GM12878 (cell line): ENCODE measurements at regions of chr14 and their contacts with region 1.

Region 1: GRCh38 chr14:30443368-30444007 is 115.5 kb upstream of the G2E3 start:
- DNase-seq: no peak
- ATAC-seq: peak; percentile 57; the same call in 1 of the 3 replicates
- H3K4me3 ChIP-seq: no peak overlapping the region
- H3K27ac ChIP-seq: no peak overlapping the region
- H3K4me1 ChIP-seq: no peaks in the 10 kb centered on the region
- H3K27me3 ChIP-seq: no peaks in the 10 kb centered on the region
- CTCF ChIP-seq: peak; percentile 32 to 71 (median 45); a peak in 5 of 6 replicates
- EP300 ChIP-seq: no peak
- POLR2A ChIP-seq: no peak
- RAD21 ChIP-seq: peak; percentile 80

Region 2: GRCh38 chr14:29548948-29549370 is 894.5 kb before region 1 on chr14:
- CTCF ChIA-PET with region 1: interaction called, 11 read pairs
- POLR2A ChIA-PET with region 1: no interaction called
- RAD21 ChIA-PET with region 1: interaction called, 5 read pairs
- SMC1A ChIA-PET with region 1: interaction called, 5 read pairs
- in situ Hi-C with region 1: loop called (anchors 10 kb)
- intact Hi-C with region 1: loop called (anchors 2 kb)
- DNase-seq: peak; percentile 5
- ATAC-seq: peak; percentile 84
- H3K4me3 ChIP-seq: no peak overlapping the region
- H3K27ac ChIP-seq: no peak overlapping the region
- H3K4me1 ChIP-seq: no peaks in the 10 kb centered on the region
- H3K27me3 ChIP-seq: no peaks in the 10 kb centered on the region
- CTCF ChIP-seq: peak; percentile 32 to 46 (median 35); a peak in 4 of 6 replicates
- EP300 ChIP-seq: no peak
- POLR2A ChIP-seq: no peak
- RAD21 ChIP-seq: peak; percentile 62

Region 3: DNA sequence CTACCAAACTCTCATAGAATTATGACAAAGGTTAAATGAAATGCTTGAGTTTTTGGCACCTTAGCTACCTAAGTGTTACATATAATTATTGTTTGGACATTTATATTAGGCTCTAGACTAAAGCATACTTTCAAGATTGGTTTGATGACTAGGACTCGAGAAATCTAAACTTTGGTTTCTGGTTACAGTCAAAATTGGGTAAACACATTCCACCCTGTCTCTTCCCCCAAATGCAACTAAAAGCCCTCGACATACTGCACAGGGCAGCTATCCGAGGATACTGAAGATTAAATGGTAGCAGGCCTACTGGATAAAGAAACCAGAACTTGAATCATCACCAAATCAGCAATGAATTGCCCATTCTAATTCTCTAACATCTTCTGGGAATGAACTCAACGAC is 885.0 kb before region 1 on chr14:
- CTCF ChIA-PET with region 1: no interaction called
- POLR2A ChIA-PET with region 1: no interaction called
- RAD21 ChIA-PET with region 1: no interaction called
- SMC1A ChIA-PET with region 1: interaction called, 3 read pairs
- in situ Hi-C with region 1: loop called (anchors 10 kb)
- intact Hi-C with region 1: no loop called
- DNase-seq: no peak
- ATAC-seq: no peak
- H3K4me3 ChIP-seq: no peak overlapping the region
- H3K27ac ChIP-seq: no peak overlapping the region
- H3K4me1 ChIP-seq: no peaks in the 10 kb centered on the region
- H3K27me3 ChIP-seq: no peaks in the 10 kb centered on the region
- CTCF ChIP-seq: no peak
- EP300 ChIP-seq: no peak
- POLR2A ChIP-seq: no peak
- RAD21 ChIP-seq: no peak

Region 4: GRCh38 chr14:30129807-30130206 is 313.7 kb before region 1 on chr14:
- CTCF ChIA-PET with region 1: no interaction called
- POLR2A ChIA-PET with region 1: no interaction called
- RAD21 ChIA-PET with region 1: no interaction called
- SMC1A ChIA-PET with region 1: no interaction called
- in situ Hi-C with region 1: no loop called
- intact Hi-C with region 1: no loop called
- DNase-seq: no peak
- ATAC-seq: no peak
- H3K4me3 ChIP-seq: no peak overlapping the region
- H3K27ac ChIP-seq: no peak overlapping the region
- H3K4me1 ChIP-seq: no peaks in the 10 kb centered on the region
- H3K27me3 ChIP-seq: no peaks in the 10 kb centered on the region
- CTCF ChIP-seq: no peak
- EP300 ChIP-seq: no peak
- POLR2A ChIP-seq: no peak
- RAD21 ChIP-seq: no peak

Region 5: GRCh38 chr14:30214461-30215090 is 228.9 kb before region 1 on chr14:
- CTCF ChIA-PET with region 1: interaction called, 15 read pairs
- POLR2A ChIA-PET with region 1: no interaction called
- RAD21 ChIA-PET with region 1: interaction called, 7 read pairs
- SMC1A ChIA-PET with region 1: interaction called, 10 read pairs
- in situ Hi-C with region 1: no loop called
- intact Hi-C with region 1: loop called (anchors 10 kb)
- DNase-seq: peak; percentile 8
- ATAC-seq: peak; percentile 63; the same call in 2 of the 3 replicates
- H3K4me3 ChIP-seq: no peak overlapping the region
- H3K27ac ChIP-seq: no peak overlapping the region
- H3K4me1 ChIP-seq: no peaks in the 10 kb centered on the region
- H3K27me3 ChIP-seq: no peaks in the 10 kb centered on the region
- CTCF ChIP-seq: peak in 2 of 3 experiments; percentile 41 to 54; a peak in 3 of 6 replicates
- EP300 ChIP-seq: no peak
- POLR2A ChIP-seq: no peak
- RAD21 ChIP-seq: peak; percentile 75

Region 6: GRCh38 chr14:30375296-30375892 is 68.1 kb before region 1 on chr14:
- CTCF ChIA-PET with region 1: interaction called, 32 read pairs
- POLR2A ChIA-PET with region 1: no interaction called
- RAD21 ChIA-PET with region 1: interaction called, 11 read pairs
- SMC1A ChIA-PET with region 1: interaction called, 27 read pairs
- in situ Hi-C with region 1: no loop called
- intact Hi-C with region 1: loop called (anchors 2 kb)
- DNase-seq: no peak
- ATAC-seq: peak; percentile 99
- H3K4me3 ChIP-seq: no peak overlapping the region
- H3K27ac ChIP-seq: no peak overlapping the region
- H3K4me1 ChIP-seq: no peaks in the 10 kb centered on the region
- H3K27me3 ChIP-seq: 0 out of 4 replicates have a peak, but pooled peaks cover 0 to 2% of the 10 kb centered on the region in 2 experiments
- CTCF ChIP-seq: peak; percentile 72 to 89 (median 87)
- EP300 ChIP-seq: no peak
- POLR2A ChIP-seq: no peak
- RAD21 ChIP-seq: peak; percentile 62